Dorsolateral prefrontal cortex (tissue), 120 donors: ENCODE measurements at regions of chr17 and their contacts with region 1.

Region 1: GRCh38 chr17:78019976-78020716 is 61.6 kb downstream of the TNRC6C start:
- DNase-seq: no peak
- H3K4me3 ChIP-seq: no peak overlapping the region
- H3K27ac ChIP-seq: peak overlapping the region in 31 of 59 donors; percentile 0 to 83 (median 40)
- H3K27me3 ChIP-seq: no peaks in the 10 kb centered on the region
- CTCF ChIP-seq: no peak

Region 2: GRCh38 chr17:77999413-78000173 is 20.6 kb before region 1 on chr17:
- intact Hi-C with region 1: no loop called
- DNase-seq: no peak
- H3K4me3 ChIP-seq: no peak overlapping the region
- H3K27ac ChIP-seq: peak overlapping the region in 19 of 59 donors; percentile 1 to 57 (median 12)
- H3K27me3 ChIP-seq: no peaks in the 10 kb centered on the region
- CTCF ChIP-seq: no peak

Region 3: GRCh38 chr17:78089576-78090281 is 69.6 kb after region 1 on chr17:
- intact Hi-C with region 1: loop called in 1 of 2 experiments (anchors 10 kb)
- DNase-seq: no peak
- H3K4me3 ChIP-seq: no peak overlapping the region
- H3K27ac ChIP-seq: peak overlapping the region in 45 of 59 donors; percentile 3 to 79 (median 45)
- H3K27me3 ChIP-seq: no peaks in the 10 kb centered on the region
- CTCF ChIP-seq: no peak

Region 4: DNA sequence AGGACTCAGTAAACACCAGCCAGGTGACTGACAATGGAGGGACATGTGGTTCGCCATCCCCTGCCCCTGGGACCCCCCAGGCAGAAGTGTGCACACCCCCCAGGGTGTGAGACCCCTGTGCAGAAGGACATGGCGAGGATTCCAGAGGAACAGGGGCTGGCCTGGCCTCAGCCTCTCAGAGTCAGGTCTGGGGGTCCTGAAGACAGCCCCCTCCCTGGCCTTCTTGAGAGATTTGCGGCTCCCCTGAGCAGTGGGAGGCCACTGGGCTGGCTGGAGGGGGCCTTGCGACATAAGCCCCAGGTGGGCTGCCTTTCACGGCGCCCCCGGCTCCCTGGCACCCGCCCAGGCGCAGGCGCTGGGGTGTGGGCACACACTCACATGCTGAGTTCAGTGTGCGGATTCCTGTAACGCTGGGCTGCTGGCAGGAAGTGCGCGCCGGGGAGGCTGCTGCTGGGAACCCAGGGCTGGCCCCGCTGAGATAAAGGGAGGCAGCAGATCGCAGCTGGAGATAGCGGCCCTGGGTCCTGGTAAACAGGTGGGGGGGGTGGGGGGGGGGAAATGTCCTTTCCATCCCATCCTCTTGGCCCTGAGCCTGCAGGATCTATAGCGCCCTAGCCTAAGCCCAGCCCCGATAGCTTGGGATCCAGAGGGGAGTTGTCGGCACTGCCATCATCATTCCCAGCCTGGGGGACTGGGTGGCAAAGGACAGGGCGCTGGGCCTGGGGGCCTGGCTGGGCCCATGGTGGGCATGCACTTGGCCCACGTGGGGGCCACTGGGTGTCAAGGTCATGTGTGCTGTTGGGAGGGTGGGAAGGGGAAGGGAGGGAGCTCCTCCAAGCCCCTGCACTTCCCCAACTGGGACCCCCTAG is 238.4 kb after region 1 on chr17:
- intact Hi-C with region 1: loop called in 1 of 2 experiments (anchors 5 kb)
- DNase-seq: no peak
- H3K4me3 ChIP-seq: no peak overlapping the region
- H3K27ac ChIP-seq: peak overlapping the region in 7 of 59 donors; percentile 6 to 66 (median 35)
- H3K27me3 ChIP-seq: no peaks in the 10 kb centered on the region
- CTCF ChIP-seq: no peak